ENCODE measurements at regions of chr5 and their contacts with region 1.

Region 1: GRCh38 chr5:54492178-54492577 is 25.4 kb upstream of the SNX18 start:
- DNase-seq: no peak
- H3K4me3 ChIP-seq: no peak overlapping the region
- H3K27ac ChIP-seq: no peak overlapping the region
- H3K4me1 ChIP-seq: no peaks in the 10 kb centered on the region
- H3K27me3 ChIP-seq: no peaks in the 10 kb centered on the region
- CTCF ChIP-seq: no peak
- EP300 ChIP-seq: no peak
- POLR2A ChIP-seq: no peak
- RAD21 ChIP-seq: no peak

Region 2: DNA sequence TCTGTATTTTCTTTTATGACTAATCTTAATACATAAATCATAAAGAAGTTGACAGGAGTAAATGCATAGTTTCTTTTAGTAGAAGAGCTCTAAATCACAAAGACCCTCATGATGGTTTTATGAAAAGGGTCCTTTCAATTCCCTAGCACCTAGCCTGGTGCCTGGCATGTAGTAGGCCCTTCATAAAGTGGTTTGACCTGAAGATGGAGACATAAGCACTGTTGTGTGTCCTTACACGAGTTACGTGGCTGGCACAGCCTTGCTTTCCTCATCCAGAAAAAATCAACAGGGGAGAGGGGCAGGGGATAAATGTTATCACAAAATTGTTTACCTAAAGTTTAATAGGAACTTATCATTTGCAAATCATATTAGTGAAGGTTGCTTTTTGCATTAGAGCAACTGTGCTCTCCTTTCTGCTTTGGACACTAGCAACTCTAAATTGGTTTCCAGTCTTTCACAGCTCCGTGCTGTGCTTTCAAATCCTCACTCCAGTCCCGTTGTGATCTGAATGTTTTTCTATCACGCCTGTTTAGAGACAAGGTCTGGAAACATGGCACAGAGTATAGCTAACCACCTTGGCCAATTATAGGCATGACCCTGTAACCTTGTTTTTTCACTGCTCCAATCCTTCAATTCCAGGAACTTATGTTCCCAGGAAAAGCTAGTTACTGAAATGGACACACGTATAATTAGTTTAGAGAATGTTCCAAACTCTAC is 237.5 kb before region 1 on chr5:
- CTCF ChIA-PET with region 1: interaction called, 27 read pairs
- POLR2A ChIA-PET with region 1: no interaction called
- DNase-seq: no peak
- H3K4me3 ChIP-seq: no peak overlapping the region
- H3K27ac ChIP-seq: no peak overlapping the region
- H3K4me1 ChIP-seq: no peaks in the 10 kb centered on the region; a peak in 1 of 7 replicates
- H3K27me3 ChIP-seq: no peaks in the 10 kb centered on the region
- CTCF ChIP-seq: peak in 2 of 3 experiments; percentile 36 to 48; a peak in 2 of 4 replicates
- EP300 ChIP-seq: no peak
- POLR2A ChIP-seq: no peak
- RAD21 ChIP-seq: peak; percentile 66 to 71

Region 3: DNA sequence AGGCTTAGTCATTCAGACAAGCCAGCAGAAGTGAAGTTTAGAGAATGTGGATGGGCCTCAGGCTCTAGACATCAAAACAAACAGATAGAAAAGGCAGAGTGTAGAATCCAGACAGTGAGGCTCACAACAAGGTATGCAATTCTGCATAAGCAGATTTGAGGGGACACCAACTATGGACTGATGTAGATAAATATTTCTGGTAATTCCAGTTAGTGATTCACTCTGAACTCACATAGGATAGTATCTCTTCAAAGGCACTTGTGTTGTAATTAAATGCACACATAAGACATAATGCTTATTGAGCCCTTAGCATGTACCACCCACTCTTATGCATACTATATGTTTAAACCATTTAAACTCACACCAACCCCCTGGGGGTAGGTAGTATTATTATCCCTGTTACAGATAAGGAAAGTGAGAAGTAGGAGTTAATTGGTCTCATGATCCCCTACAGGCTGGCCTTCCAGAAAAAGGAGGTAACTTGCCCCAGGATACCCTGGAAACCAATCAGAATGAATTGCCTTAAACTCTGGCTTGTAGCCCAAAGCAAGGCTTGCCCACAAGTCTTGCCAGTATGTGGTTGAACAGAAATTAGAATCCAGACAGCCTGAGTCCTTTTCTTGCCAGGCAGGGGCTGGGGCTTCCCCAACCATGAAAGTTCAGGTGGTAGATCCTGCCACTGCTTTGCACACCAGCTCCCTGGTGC is 76.1 kb before region 1 on chr5:
- CTCF ChIA-PET with region 1: interaction called, 15 read pairs
- POLR2A ChIA-PET with region 1: no interaction called
- DNase-seq: no peak
- H3K4me3 ChIP-seq: no peak overlapping the region
- H3K27ac ChIP-seq: no peak overlapping the region
- H3K4me1 ChIP-seq: no peaks in the 10 kb centered on the region
- H3K27me3 ChIP-seq: no peaks in the 10 kb centered on the region
- CTCF ChIP-seq: no peak
- EP300 ChIP-seq: no peak
- POLR2A ChIP-seq: no peak
- RAD21 ChIP-seq: no peak

Region 4: GRCh38 chr5:54469622-54470021 is 22.6 kb before region 1 on chr5:
- CTCF ChIA-PET with region 1: interaction called, 18 read pairs
- POLR2A ChIA-PET with region 1: interaction called, 4 read pairs
- DNase-seq: no peak
- H3K4me3 ChIP-seq: no peak overlapping the region
- H3K27ac ChIP-seq: no peak overlapping the region
- H3K4me1 ChIP-seq: no peaks in the 10 kb centered on the region
- H3K27me3 ChIP-seq: no peaks in the 10 kb centered on the region
- CTCF ChIP-seq: no peak
- EP300 ChIP-seq: no peak
- POLR2A ChIP-seq: no peak
- RAD21 ChIP-seq: no peak

Region 5: GRCh38 chr5:54517174-54518092 is 25.3 kb after region 1 on chr5 and contains the start of gene SNX18:
- CTCF ChIA-PET with region 1: interaction called, 10 read pairs
- POLR2A ChIA-PET with region 1: no interaction called
- DNase-seq: peak; percentile 71 to 91
- H3K4me3 ChIP-seq: peak within 1 kb of the TSS; percentile 44 to 75 (median 58)
- H3K27ac ChIP-seq: 0 out of 2 replicates have a peak within 1 kb of the TSS, but pooled peaks have one; percentile 28
- H3K4me1 ChIP-seq: peaks cover 0 to 13% (median 9%) of the 10 kb centered on the region in 4 experiments; a peak in 5 of 7 replicates
- H3K27me3 ChIP-seq: peaks cover 0 to 16% (median 12%) of the 10 kb centered on the region in 4 experiments; a peak in 5 of 7 replicates
- CTCF ChIP-seq: peak; percentile 81 to 97 (median 86)
- EP300 ChIP-seq: peak in 1 of 2 experiments; percentile 77; a peak in 1 of 3 replicates
- POLR2A ChIP-seq: peak in 1 of 2 experiments; percentile 56; a peak in 1 of 3 replicates
- RAD21 ChIP-seq: peak; percentile 91 to 97
- total RNA-seq, gene SNX18: 17.3 and 17.7 TPM in 2 replicates